AG04449 (cell line): ENCODE measurements at regions of chr3 and their contacts with region 1.

Region 1: GRCh38 chr3:44511238-44511567 is 33.7 kb upstream of the ZNF445 start:
- DNase-seq: no peak
- H3K4me3 ChIP-seq: peak overlapping the region; percentile 70
- CTCF ChIP-seq: no peak

Region 2: DNA sequence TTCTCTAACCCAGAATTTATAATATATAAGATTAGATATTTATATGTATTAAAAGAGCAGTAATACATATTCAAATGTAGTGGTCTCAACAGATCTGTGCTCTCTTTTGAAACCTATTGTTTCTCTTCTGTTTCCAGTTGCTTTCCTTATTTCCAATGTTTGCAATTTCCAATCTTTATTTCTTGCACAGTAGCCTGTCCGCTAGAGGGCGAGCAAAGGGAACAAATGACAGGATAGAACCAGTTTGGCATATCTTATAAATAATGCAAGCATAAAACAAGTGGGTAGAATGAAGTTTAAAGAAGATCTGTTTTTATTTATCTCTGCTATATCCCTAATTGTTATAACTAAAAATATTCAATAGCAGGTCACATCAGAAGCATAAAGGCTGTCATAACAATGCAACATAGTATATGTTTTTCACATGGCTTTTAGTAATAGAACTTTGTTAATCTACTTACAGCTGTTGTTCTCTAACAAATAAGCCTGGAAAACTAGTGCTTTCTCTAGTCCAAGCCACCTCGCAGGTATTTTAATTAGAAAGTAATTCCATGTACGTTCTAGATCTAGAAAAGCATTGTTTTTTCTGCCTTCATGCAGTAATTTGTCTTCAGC is 187.8 kb before region 1 on chr3:
- CTCF ChIA-PET with region 1: interaction called, 12 read pairs
- POLR2A ChIA-PET with region 1: no interaction called
- DNase-seq: no peak
- H3K4me3 ChIP-seq: no peak overlapping the region
- CTCF ChIP-seq: peak; percentile 65

Region 3: GRCh38 chr3:44529927-44530326 is 18.7 kb after region 1 on chr3:
- CTCF ChIA-PET with region 1: interaction called, 11 read pairs
- POLR2A ChIA-PET with region 1: no interaction called
- DNase-seq: no peak
- H3K4me3 ChIP-seq: no peak overlapping the region
- CTCF ChIP-seq: no peak